ENCODE measurements at regions of chr16 and their contacts with region 1.

Region 1: DNA sequence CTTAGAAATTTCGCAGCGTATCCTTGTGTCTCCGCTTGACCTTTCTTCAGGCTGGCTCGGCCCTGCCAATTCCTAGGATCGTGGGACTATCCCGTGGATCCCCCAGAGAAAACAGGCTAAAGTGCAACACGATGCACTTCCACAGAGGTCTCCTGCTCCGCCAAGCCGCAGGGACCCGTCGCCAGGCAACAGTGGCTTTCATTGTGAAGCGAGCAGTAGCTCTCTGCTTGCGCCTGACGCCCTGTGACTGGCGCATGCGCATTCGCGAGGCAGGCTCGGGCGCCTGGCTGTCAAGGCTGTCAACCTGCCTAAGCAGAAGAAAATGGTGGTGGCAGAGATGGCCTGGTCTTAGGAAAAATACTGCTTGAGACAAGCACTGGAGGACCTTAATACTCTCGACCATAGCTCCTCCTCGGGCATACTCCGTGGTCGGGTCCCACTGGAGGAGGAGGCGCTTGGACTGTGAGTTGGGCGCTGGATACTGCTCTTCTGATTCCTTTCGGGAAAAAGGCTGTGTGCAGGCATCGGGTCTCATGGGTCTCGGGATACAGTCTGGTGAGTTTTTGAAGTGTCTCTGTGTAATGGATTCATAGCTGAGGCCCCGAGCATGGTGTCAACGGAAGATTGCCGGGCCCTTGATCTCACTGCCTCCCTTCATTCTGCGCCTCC is 2336.1 kb downstream of the TP53TG3F start:
- DNase-seq: no peak
- ATAC-seq: no peak
- H3K4me3 ChIP-seq: no peak overlapping the region
- H3K27ac ChIP-seq: no peak overlapping the region
- H3K4me1 ChIP-seq: no peaks in the 10 kb centered on the region
- H3K27me3 ChIP-seq: no peaks in the 10 kb centered on the region
- CTCF ChIP-seq: no peak
- POLR2A ChIP-seq: no peak

Region 2: DNA sequence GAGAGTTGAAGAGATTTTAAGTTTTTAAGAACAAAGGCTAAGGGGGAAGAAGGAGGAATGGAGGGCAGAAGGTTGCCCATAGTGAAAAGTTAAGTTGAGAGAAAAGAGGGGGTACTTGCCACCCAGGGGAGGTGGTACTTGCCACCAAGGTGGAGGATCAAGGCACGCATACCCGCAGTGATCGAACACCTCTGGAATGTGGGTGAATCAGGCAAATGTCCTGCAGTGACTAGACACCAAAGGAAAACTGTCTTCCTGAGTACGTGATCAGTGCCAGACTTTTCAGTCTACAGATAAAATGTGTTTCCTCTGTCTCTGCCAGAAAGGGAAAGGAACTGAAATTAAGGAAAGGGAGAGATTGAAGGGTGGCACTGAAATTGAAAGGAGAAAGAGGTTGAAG is 50.8 kb before region 1 on chr16:
- intact Hi-C with region 1: loop called in 1 of 2 experiments (anchors 10 kb)
- DNase-seq: no peak
- ATAC-seq: no peak
- H3K4me3 ChIP-seq: no peak overlapping the region
- H3K27ac ChIP-seq: no peak overlapping the region
- H3K4me1 ChIP-seq: no peaks in the 10 kb centered on the region
- H3K27me3 ChIP-seq: no peaks in the 10 kb centered on the region
- CTCF ChIP-seq: no peak
- POLR2A ChIP-seq: no peak